Naive thymus-derived CD8-positive, alpha-beta T cell (primary cell): ENCODE measurements at regions of chrX and their contacts with region 1.

Region 1: DNA sequence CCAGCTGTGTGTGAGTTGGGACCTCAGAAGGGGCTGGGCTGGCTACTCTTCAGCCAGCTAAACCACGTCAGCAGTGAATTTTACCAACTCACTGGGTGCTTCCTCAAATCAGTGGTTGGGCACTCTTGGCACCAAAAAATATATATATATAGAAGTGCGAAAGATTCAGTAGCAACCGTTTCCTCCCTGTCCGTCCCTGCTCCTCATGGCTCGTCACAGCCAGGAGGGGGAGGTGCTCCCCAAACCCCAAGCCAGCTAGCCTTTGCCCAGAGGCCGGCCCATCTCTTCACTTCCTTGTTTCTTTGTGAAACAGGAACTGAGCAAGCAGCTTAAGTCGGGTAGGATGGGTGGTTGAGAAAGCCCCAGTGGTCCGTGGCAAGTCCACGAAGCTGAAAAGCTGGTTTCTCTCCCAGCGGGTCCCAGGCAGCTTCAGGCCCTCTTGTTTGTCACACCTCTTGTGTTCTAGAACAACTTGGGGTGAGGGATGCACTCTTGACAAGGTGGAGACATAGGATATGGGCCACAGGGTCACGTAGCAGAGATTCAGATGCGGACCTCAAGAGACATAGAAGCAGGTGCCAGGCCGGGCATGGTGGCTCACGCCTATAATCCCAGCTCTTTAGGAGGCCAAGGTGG is 6.8 kb upstream of the SASH3 start:
- DNase-seq: peak in 2 of 10 donors; percentile 41 to 66
- ATAC-seq: no peak
- H3K4me3 Mint-ChIP-seq: peak overlapping the region in 9 of 10 donors; percentile 18 to 77 (median 66)
- H3K27ac Mint-ChIP-seq: peak overlapping the region; percentile 90 to 96 (median 94)
- H3K4me1 Mint-ChIP-seq: peaks cover 21 to 92% (median 73%) of the 10 kb centered on the region in 4 donors
- H3K27me3 Mint-ChIP-seq: peaks cover 0 to 2% (median 0%) of the 10 kb centered on the region in 5 donors

Region 2: GRCh38 chrX:129606918-129607317 is 166.0 kb before region 1 on chrX:
- POLR2A ChIA-PET with region 1: no interaction called
- DNase-seq: peak; percentile 18 to 70 (median 50)
- ATAC-seq: peak; percentile 42 to 50
- H3K4me3 Mint-ChIP-seq: no peak overlapping the region
- H3K27ac Mint-ChIP-seq: peak overlapping the region in 1 of 10 donors; percentile 19
- H3K4me1 Mint-ChIP-seq: peaks cover 7 to 28% (median 20%) of the 10 kb centered on the region in 4 donors
- H3K27me3 Mint-ChIP-seq: no peaks in the 10 kb centered on the region

Region 3: GRCh38 chrX:129754056-129755024 is 18.6 kb before region 1 on chrX:
- POLR2A ChIA-PET with region 1: interaction called, 382 read pairs
- DNase-seq: no peak
- ATAC-seq: peak in 1 of 2 donors; percentile 20
- H3K4me3 Mint-ChIP-seq: peak overlapping the region in 5 of 10 donors; percentile 3 to 64 (median 44)
- H3K27ac Mint-ChIP-seq: peak overlapping the region in 5 of 10 donors; percentile 6 to 85 (median 66)
- H3K4me1 Mint-ChIP-seq: peaks cover 11 to 51% (median 43%) of the 10 kb centered on the region in 4 donors
- H3K27me3 Mint-ChIP-seq: no peaks in the 10 kb centered on the region

Region 4: DNA sequence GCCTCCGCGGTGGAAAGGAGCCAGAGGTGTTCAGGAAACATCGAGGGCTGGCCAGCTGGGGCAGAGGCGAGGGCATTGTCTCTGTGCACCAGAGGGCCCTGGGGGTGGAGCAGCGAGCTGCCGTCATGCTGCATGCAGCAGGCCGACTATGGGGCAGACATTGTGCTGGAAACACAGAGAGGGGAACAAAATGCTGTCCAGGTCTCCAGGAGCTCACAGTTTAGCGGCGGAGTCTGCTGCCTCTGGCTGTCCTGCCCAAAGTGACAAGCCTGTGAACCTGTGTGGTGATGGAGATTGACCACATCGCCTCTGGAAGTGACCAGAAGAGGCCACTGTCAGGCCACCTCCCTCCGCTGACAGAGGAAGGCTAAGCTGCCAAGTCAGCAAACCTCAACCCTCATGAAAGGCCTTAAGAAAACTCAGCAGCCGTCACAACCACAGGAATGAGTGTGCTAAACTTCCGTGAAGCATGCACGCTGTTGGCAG is 13.3 kb before region 1 on chrX:
- POLR2A ChIA-PET with region 1: interaction called, 382 read pairs
- DNase-seq: peak in 7 of 10 donors; percentile 37 to 73 (median 67)
- ATAC-seq: peak; percentile 86 to 88
- H3K4me3 Mint-ChIP-seq: peak overlapping the region; percentile 16 to 74 (median 44)
- H3K27ac Mint-ChIP-seq: peak overlapping the region in 7 of 10 donors; percentile 28 to 80 (median 58)
- H3K4me1 Mint-ChIP-seq: peaks cover 13 to 64% (median 56%) of the 10 kb centered on the region in 4 donors
- H3K27me3 Mint-ChIP-seq: no peaks in the 10 kb centered on the region